HEK293 (cell line): ENCODE measurements at regions of chr11 and their contacts with region 1.

Region 1: DNA sequence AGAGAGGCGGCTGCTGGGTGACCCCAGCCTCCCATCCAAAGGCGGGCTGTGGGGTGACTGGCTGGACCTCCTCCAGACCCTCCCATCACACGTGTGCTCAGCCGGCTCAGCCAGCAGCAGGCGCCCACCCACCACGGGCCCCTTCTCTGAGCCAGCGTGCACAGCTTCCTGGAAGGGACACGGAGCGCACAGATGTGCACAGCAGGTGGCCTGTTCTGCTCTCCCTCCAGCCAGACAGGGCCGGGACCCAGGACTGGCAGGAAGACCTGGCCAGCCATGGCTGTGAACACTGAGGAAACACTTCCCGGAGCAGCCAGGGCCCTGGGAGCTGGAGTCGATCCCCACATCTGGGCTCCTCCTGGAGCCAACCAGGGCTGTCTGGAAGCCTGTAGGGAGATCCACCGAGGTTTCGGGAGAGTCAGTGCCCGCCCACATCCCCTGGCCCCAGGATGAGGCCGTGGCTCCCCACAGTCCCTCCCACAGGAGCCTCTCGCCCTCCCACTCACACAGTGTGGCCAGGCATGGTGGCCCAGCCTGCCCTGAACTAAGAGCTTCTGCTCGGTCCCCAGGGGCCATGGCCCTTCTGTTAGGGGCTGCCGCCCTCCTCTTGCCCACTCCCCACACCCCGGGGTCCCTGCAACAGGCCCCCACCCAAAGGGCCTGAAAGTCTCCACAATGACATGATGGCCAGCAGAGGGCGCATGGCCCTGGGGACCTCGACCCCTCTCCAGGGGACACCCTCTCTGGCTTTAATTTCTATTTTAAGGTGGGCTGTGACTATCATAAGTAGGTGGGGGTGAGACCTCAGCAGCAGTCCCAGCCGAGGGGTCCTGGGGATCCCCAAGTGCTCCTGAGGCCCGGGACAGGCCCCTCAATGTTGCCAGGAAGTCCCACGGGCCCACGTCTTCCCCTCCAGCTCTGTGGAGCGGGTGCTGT is 90.6 kb upstream of the FGF3 start:
- H3K4me3 ChIP-seq: no peak overlapping the region
- H3K27ac ChIP-seq: no peak overlapping the region
- H3K4me1 ChIP-seq: no peaks in the 10 kb centered on the region
- CTCF ChIP-seq: 0 out of 2 replicates have a peak, but pooled peaks have one; percentile 14

Region 2: DNA sequence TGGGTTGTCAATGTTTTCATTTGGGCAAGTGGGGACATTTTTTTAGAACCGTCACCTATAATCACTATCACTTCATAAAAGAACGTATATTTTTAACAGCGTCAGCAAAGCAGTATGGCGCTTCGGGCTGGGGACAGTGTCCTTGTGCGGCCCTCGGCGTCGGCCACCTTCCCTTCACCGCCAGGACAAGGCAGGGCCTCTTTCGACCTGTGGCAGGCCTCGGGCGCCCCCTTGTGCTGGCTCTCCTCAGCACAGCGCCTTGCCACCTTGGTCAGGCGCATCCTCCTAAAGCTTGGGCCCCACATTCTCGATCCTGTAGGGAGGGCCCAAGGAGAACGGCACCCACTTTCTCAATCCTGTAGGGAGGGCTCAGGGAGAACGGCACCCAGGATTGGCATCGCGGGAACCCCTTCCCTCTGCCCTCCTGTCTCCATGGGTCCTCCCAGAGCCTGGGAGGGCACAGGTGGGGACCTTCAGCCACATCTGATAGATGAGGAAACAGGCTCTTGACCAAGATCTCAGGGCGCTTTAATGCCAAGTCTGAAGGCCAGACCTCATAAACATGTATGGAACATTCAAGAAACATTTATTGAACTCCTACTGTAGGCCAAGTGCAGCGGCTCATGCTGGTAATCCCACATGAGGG is 281.8 kb after region 1 on chr11:
- CTCF ChIA-PET with region 1: interaction called, 17 read pairs
- POLR2A ChIA-PET with region 1: no interaction called
- H3K4me3 ChIP-seq: no peak overlapping the region
- H3K27ac ChIP-seq: no peak overlapping the region
- H3K4me1 ChIP-seq: no peaks in the 10 kb centered on the region
- CTCF ChIP-seq: peak; percentile 79

Region 3: DNA sequence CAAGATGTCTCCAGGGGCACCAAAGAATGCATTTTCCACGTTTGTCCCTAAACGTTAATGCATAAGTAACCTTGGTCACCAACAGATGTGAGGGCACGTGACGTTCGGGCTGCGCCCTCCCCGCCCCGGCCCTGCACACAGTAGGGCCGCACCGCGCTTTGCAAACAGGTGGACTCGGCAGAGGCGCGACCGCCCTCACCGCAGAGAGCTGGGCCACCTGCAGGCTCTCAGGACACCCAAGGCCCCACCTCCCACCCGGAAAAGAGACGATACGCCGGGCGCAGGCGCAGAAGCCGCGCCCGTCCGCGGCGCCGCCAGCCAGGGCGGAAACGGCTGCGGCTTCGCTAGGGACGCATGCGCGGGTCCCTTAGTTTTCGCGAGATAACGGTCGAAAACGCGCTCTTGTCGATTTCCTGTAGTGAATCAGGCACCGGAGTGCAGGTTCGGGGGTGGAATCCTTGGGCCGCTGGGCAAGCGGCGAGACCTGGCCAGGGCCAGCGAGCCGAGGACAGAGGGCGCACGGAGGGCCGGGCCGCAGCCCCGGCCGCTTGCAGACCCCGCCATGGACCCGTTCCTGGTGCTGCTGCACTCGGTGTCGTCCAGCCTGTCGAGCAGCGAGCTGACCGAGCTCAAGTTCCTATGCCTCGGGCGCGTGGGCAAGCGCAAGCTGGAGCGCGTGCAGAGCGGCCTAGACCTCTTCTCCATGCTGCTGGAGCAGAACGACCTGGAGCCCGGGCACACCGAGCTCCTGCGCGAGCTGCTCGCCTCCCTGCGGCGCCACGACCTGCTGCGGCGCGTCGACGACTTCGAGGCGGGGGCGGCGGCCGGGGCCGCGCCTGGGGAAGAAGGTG is 293.3 kb after region 1 on chr11 and contains the start of gene FADD:
- CTCF ChIA-PET with region 1: interaction called, 14 read pairs
- POLR2A ChIA-PET with region 1: no interaction called
- H3K4me3 ChIP-seq: peak within 1 kb of the TSS; percentile 69
- H3K27ac ChIP-seq: peak within 1 kb of the TSS; percentile 72; the same call in 1 of the 2 replicates
- H3K4me1 ChIP-seq: 0 out of 2 replicates have a peak, but pooled peaks cover 2% of the 10 kb centered on the region
- CTCF ChIP-seq: no peak